Panc1 (cell line): ENCODE measurements at regions of chr7 and their contacts with region 1.

Region 1: GRCh38 chr7:32275216-32275979 is 205.2 kb upstream of the PDE1C start:
- DNase-seq: no peak
- ATAC-seq: no peak
- H3K4me3 ChIP-seq: no peak overlapping the region
- H3K27ac ChIP-seq: no peak overlapping the region
- H3K4me1 ChIP-seq: no peaks in the 10 kb centered on the region
- H3K27me3 ChIP-seq: peaks cover 8% of the 10 kb centered on the region; the same call in 1 of the 2 replicates
- CTCF ChIP-seq: no peak

Region 2: GRCh38 chr7:31857172-31857571 is 418.2 kb before region 1 on chr7:
- CTCF ChIA-PET with region 1: no interaction called
- POLR2A ChIA-PET with region 1: no interaction called
- in situ Hi-C with region 1: no loop called
- intact Hi-C with region 1: no loop called
- DNase-seq: no peak
- ATAC-seq: no peak
- H3K4me3 ChIP-seq: no peak overlapping the region
- H3K27ac ChIP-seq: no peak overlapping the region
- H3K4me1 ChIP-seq: no peaks in the 10 kb centered on the region
- H3K27me3 ChIP-seq: no peaks in the 10 kb centered on the region
- CTCF ChIP-seq: no peak

Region 3: GRCh38 chr7:32005577-32005976 is 269.8 kb before region 1 on chr7:
- CTCF ChIA-PET with region 1: no interaction called
- POLR2A ChIA-PET with region 1: no interaction called
- in situ Hi-C with region 1: no loop called
- intact Hi-C with region 1: no loop called
- DNase-seq: no peak
- ATAC-seq: no peak
- H3K4me3 ChIP-seq: no peak overlapping the region
- H3K27ac ChIP-seq: no peak overlapping the region
- H3K4me1 ChIP-seq: no peaks in the 10 kb centered on the region
- H3K27me3 ChIP-seq: no peaks in the 10 kb centered on the region
- CTCF ChIP-seq: no peak

Region 4: GRCh38 chr7:32500922-32501341 is 225.5 kb after region 1 on chr7:
- CTCF ChIA-PET with region 1: no interaction called
- POLR2A ChIA-PET with region 1: no interaction called
- in situ Hi-C with region 1: no loop called
- intact Hi-C with region 1: no loop called
- DNase-seq: no peak
- ATAC-seq: no peak
- H3K4me3 ChIP-seq: no peak overlapping the region
- H3K27ac ChIP-seq: no peak overlapping the region
- H3K4me1 ChIP-seq: peaks cover 13% of the 10 kb centered on the region
- H3K27me3 ChIP-seq: no peaks in the 10 kb centered on the region
- CTCF ChIP-seq: no peak

Region 5: DNA sequence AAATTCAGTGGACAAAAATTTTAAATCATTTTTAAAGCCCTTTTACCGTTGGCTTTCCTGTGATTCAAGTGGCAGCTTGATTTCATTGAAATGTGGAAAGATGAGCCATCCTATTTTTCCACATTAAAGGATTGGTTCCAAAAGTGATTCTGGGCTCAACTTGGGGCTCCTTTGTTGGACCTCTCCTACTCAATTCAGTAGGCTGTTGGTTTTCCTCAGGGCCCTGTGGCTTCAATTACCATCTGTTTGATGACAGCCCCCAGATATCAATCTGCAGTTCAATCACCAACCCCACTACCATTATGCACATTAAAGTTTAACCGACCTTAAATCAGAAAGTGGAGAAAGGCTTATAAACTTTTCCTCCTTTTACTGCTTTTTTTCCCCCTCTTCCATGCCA is 267.2 kb after region 1 on chr7:
- CTCF ChIA-PET with region 1: no interaction called
- POLR2A ChIA-PET with region 1: interaction called, 24 read pairs
- in situ Hi-C with region 1: no loop called
- intact Hi-C with region 1: no loop called
- DNase-seq: no peak
- ATAC-seq: no peak
- H3K4me3 ChIP-seq: no peak overlapping the region
- H3K27ac ChIP-seq: no peak overlapping the region
- H3K4me1 ChIP-seq: no peaks in the 10 kb centered on the region
- H3K27me3 ChIP-seq: no peaks in the 10 kb centered on the region
- CTCF ChIP-seq: no peak